PC-9 (cell line): ENCODE measurements at regions of chr12 and their contacts with region 1.

Region 1: GRCh38 chr12:6607751-6608591 is 792 bp upstream of the CHD4 start:
- DNase-seq: peak; percentile 75 to 83
- H3K4me3 ChIP-seq: no peak overlapping the region
- H3K27ac ChIP-seq: 0 out of 2 replicates have a peak overlapping the region, but pooled peaks have one; percentile 4
- H3K4me1 ChIP-seq: peaks cover 49% of the 10 kb centered on the region
- H3K27me3 ChIP-seq: no peaks in the 10 kb centered on the region
- CTCF ChIP-seq: no peak

Region 2: GRCh38 chr12:6500466-6500865 is 107.5 kb before region 1 on chr12:
- CTCF ChIA-PET with region 1: no interaction called
- POLR2A ChIA-PET with region 1: interaction called, 12 read pairs
- intact Hi-C with region 1: no loop called
- DNase-seq: no peak
- H3K4me3 ChIP-seq: no peak overlapping the region
- H3K27ac ChIP-seq: no peak overlapping the region
- H3K4me1 ChIP-seq: peaks cover 5% of the 10 kb centered on the region; the same call in 1 of the 2 replicates
- H3K27me3 ChIP-seq: no peaks in the 10 kb centered on the region
- CTCF ChIP-seq: no peak

Region 3: DNA sequence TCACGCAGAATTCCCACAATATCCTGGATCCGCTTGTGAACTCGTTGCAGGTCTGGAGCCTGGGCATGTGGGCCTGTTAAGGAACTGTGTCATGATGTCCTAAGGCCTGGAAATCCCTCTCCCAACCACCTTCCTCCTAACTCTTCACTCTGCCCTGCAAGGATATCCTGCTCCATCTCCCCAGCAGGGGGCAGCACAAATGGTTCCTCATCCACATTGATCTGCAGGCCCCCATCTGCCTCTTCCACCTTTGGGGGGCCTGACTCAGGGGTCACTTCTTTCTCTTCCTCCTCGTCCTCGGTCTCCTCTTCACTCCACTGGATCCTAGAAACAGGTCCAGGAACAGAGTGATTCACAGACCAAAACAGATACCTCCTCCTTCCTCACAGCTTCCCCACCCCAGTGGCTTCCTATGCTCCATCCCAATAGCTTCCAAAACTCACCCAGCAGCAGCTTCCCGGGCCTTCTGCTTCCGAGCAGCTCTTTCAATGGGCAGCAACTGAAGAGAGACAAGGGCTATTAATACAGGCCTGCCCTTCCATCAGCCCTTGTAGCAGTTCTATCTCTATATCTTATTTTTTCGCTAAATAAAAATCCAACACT is 44.4 kb before region 1 on chr12:
- CTCF ChIA-PET with region 1: no interaction called
- POLR2A ChIA-PET with region 1: interaction called, 3 read pairs
- intact Hi-C with region 1: loop called (anchors 1 kb)
- DNase-seq: peak; percentile 33 to 53
- H3K4me3 ChIP-seq: no peak overlapping the region
- H3K27ac ChIP-seq: no peak overlapping the region
- H3K4me1 ChIP-seq: peaks cover 6% of the 10 kb centered on the region; the same call in 1 of the 2 replicates
- H3K27me3 ChIP-seq: no peaks in the 10 kb centered on the region
- CTCF ChIP-seq: peak; percentile 94

Region 4: GRCh38 chr12:6582196-6582595 is 25.8 kb before region 1 on chr12:
- CTCF ChIA-PET with region 1: no interaction called
- POLR2A ChIA-PET with region 1: no interaction called
- intact Hi-C with region 1: loop called (anchors 1 kb)
- DNase-seq: peak in 1 of 2 experiments; percentile 33
- H3K4me3 ChIP-seq: no peak overlapping the region
- H3K27ac ChIP-seq: no peak overlapping the region
- H3K4me1 ChIP-seq: 0 out of 2 replicates have a peak, but pooled peaks cover 3% of the 10 kb centered on the region
- H3K27me3 ChIP-seq: no peaks in the 10 kb centered on the region
- CTCF ChIP-seq: no peak

Region 5: DNA sequence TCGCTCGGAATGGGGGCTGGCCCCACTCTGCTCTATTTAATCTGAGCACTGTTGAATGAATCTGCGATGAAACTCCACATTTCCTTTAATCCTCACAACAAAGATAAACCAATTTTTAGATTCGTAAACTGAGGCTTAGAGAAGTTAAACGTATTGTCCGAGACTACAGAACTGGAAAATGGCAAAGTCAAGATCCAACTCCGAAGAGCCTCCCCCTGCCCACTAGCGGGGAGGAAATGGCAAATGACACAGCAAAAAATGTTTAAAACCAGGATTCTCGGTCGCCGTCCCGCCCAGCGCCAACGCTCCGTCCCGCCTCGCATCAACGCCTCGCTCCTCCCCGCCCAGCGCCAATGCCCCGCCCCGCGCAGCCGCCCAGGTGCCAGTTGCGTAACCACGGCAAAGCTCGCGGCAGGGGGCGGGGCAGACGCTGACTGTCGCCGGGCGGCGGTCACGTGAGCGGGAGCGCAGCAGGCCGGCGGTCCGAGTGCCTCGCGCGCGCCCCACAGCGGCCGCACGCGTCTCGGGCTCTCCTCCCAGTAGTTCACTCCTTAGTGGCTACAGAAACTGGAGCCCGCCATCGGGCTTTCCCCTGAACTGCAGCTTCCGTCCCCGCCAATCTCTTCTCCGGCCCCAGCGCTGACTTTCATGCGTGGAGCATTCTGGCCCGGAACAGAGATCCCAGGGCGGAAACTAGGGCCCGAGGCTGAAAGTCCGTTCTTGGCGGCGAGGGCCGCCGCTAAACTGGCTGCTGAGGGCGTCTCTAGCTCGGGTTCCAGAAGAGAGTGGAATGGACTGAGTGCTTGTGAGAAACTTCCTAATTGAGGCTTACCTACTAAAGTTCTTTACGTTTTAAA is 283.0 kb after region 1 on chr12:
- CTCF ChIA-PET with region 1: no interaction called
- POLR2A ChIA-PET with region 1: interaction called, 48 read pairs
- intact Hi-C with region 1: no loop called
- DNase-seq: peak; percentile 89 to 100
- H3K4me3 ChIP-seq: peak overlapping the region; percentile 57
- H3K27ac ChIP-seq: peak overlapping the region; percentile 90
- H3K4me1 ChIP-seq: peaks cover 15% of the 10 kb centered on the region
- H3K27me3 ChIP-seq: no peaks in the 10 kb centered on the region
- CTCF ChIP-seq: peak; percentile 74

Region 6: DNA sequence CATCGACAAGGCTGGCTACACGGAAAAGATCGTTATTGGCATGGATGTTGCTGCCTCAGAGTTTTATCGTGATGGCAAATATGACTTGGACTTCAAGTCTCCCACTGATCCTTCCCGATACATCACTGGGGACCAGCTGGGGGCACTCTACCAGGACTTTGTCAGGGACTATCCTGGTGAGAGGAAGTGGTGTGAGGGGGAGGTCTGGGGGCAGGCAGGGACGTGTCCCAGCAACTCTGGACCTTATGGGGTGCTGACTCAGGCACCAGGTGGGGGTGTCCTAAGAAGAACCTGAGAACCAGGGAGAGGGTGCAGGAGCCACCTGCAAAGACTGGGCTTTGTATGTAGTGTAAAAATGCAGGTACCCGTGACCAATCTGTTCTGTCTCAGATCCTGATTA is 311.6 kb after region 1 on chr12:
- CTCF ChIA-PET with region 1: no interaction called
- POLR2A ChIA-PET with region 1: no interaction called
- intact Hi-C with region 1: no loop called
- DNase-seq: no peak
- H3K4me3 ChIP-seq: no peak overlapping the region
- H3K27ac ChIP-seq: no peak overlapping the region
- H3K4me1 ChIP-seq: peaks cover 12% of the 10 kb centered on the region
- H3K27me3 ChIP-seq: peaks cover 4% of the 10 kb centered on the region; the same call in 1 of the 2 replicates
- CTCF ChIP-seq: no peak